ENCODE measurements at regions of chr1 and their contacts with region 1.

Region 1: GRCh38 chr1:228165372-228166169 is at the start of gene IBA57:
- DNase-seq: peak; percentile 100
- ATAC-seq: peak; percentile 88
- H3K4me3 Mint-ChIP-seq: peak within 1 kb of the TSS; percentile 94
- H3K27ac Mint-ChIP-seq: peak within 1 kb of the TSS; percentile 96
- H3K4me1 Mint-ChIP-seq: peaks cover 33% of the 10 kb centered on the region
- H3K27me3 Mint-ChIP-seq: no peaks in the 10 kb centered on the region
- total RNA-seq, gene IBA57: 9.7 to 12.2 TPM

Region 2: GRCh38 chr1:228131766-228132165 is 33.8 kb before region 1 on chr1:
- POLR2A ChIA-PET with region 1: interaction called, 62 read pairs
- DNase-seq: no peak
- ATAC-seq: no peak
- H3K4me3 Mint-ChIP-seq: no peak overlapping the region
- H3K27ac Mint-ChIP-seq: no peak overlapping the region
- H3K4me1 Mint-ChIP-seq: peaks cover 12% of the 10 kb centered on the region
- H3K27me3 Mint-ChIP-seq: peaks cover 29% of the 10 kb centered on the region

Region 3: DNA sequence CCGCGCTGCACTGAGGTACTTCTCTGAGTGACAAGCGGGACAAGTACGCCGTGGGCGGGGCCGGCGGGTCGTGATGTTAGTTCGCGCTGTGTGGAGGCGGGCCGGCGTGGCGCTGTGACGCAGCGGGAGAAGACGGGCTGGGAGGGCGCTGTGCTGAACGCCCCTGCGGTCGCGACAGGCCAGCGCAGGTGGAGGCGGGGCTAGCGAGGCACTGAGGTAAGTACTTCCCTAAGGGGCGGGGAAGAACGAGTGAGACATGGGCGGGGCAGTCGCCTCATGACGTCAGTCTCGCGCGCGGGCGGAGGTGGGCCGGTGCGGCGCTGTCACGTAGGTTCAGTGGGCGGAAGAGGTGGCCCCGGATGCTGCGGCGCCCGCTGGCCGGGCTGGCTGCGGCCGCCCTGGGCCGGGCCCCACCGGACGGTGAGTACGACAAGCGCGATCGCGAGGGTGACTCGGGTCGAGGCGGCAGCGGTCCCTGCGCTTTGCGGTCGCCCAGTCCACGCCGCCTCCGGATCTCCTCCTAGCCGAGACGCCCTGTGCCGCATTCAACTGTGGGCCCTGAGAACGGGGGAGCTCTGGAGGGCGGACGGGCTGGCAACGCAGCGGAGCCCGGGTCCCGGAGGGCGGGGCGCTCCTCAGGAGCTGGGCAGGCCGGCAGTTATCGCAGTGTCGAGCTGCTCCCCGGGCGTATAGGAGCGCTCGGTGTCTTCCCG is 25.5 kb before region 1 on chr1 and contains the start of gene GUK1:
- POLR2A ChIA-PET with region 1: interaction called, 62 read pairs
- DNase-seq: peak; percentile 99
- ATAC-seq: peak; percentile 89
- H3K4me3 Mint-ChIP-seq: peak within 1 kb of the TSS; percentile 96
- H3K27ac Mint-ChIP-seq: peak within 1 kb of the TSS; percentile 98
- H3K4me1 Mint-ChIP-seq: peaks cover 39% of the 10 kb centered on the region
- H3K27me3 Mint-ChIP-seq: peaks cover 16% of the 10 kb centered on the region
- total RNA-seq, gene GUK1: 289 to 327 TPM

Region 4: GRCh38 chr1:228150461-228151179 is 15.0 kb before region 1 on chr1:
- POLR2A ChIA-PET with region 1: interaction called, 16 read pairs
- DNase-seq: peak; percentile 26
- ATAC-seq: no peak
- H3K4me3 Mint-ChIP-seq: no peak overlapping the region
- H3K27ac Mint-ChIP-seq: no peak overlapping the region
- H3K4me1 Mint-ChIP-seq: peaks cover 4% of the 10 kb centered on the region
- H3K27me3 Mint-ChIP-seq: no peaks in the 10 kb centered on the region

Region 5: GRCh38 chr1:228180271-228180958 is 14.8 kb after region 1 on chr1:
- POLR2A ChIA-PET with region 1: no interaction called
- DNase-seq: no peak
- ATAC-seq: no peak
- H3K4me3 Mint-ChIP-seq: no peak overlapping the region
- H3K27ac Mint-ChIP-seq: no peak overlapping the region
- H3K4me1 Mint-ChIP-seq: peaks cover 3% of the 10 kb centered on the region
- H3K27me3 Mint-ChIP-seq: no peaks in the 10 kb centered on the region

Region 6: GRCh38 chr1:228256626-228257375 is 91.2 kb after region 1 on chr1:
- POLR2A ChIA-PET with region 1: no interaction called
- DNase-seq: no peak
- ATAC-seq: no peak
- H3K4me3 Mint-ChIP-seq: no peak overlapping the region
- H3K27ac Mint-ChIP-seq: no peak overlapping the region
- H3K4me1 Mint-ChIP-seq: no peaks in the 10 kb centered on the region
- H3K27me3 Mint-ChIP-seq: no peaks in the 10 kb centered on the region